CD4-positive, alpha-beta T cell (primary cell): ENCODE measurements at regions of chr12 and their contacts with region 1.

Region 1: DNA sequence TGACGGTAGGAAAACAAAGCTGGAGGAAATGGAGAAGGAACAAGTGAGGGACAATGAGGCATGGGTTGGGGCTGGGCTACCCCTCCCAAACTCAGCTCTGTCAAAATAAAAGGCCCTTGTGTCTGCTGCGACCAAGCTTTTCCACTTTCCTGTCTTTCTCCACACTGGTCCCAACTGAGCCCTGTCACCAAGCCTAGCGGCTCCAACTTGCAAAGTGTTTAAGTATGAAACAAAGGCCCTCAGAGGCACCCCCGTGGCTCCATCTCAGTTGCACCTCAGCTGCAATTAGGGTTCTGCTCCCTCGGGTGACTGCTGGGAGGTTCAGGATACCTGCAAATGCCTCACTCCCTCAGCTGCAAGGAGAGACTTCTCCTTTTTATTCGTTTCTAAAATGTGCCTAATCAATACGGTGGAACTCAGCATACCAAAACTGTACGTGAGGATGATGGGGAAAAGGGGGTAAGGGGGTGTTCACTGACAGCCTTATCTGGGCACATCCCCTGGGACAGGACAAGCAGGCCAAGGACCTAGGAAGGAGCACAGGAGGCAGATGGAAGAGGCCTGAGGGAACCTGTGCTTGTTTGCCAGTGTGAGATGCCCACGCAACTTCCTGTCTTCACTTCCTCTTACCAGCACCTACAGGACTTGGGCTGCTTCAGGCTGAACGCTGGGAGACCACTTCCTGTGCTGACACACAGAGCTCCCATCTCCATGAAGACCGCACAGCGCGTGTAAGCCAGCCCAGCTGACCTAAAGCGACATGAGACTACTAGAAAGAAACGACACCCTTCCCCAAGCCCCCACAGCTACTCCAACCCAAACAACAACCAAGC is 8.9 kb downstream of the VAMP1 start:
- DNase-seq: peak; percentile 59 to 96 (median 78)
- ATAC-seq: peak; percentile 82
- H3K4me3 ChIP-seq: peak overlapping the region; percentile 35
- H3K4me3 Mint-ChIP-seq: peak overlapping the region; percentile 79
- H3K27ac ChIP-seq: peak overlapping the region; percentile 94 to 97
- H3K27ac Mint-ChIP-seq: peak overlapping the region; percentile 92
- H3K4me1 ChIP-seq: peaks cover 91% of the 10 kb centered on the region
- H3K4me1 Mint-ChIP-seq: peaks cover 85% of the 10 kb centered on the region
- H3K27me3 ChIP-seq: no peaks in the 10 kb centered on the region
- H3K27me3 Mint-ChIP-seq: no peaks in the 10 kb centered on the region
- CTCF ChIP-seq: no peak

Region 2: GRCh38 chr12:6423267-6424007 is 38.2 kb before region 1 on chr12:
- CTCF ChIA-PET with region 1: interaction called, 61 read pairs
- POLR2A ChIA-PET with region 1: interaction called, 99 read pairs
- intact Hi-C with region 1: loop called (anchors 1 kb)
- DNase-seq: peak; percentile 58 to 94 (median 67)
- ATAC-seq: peak; percentile 73
- H3K4me3 ChIP-seq: no peak overlapping the region
- H3K4me3 Mint-ChIP-seq: peak overlapping the region; percentile 36
- H3K27ac ChIP-seq: peak overlapping the region in 1 of 2 donors; percentile 29
- H3K27ac Mint-ChIP-seq: peak overlapping the region; percentile 65
- H3K4me1 ChIP-seq: peaks cover 43% of the 10 kb centered on the region
- H3K4me1 Mint-ChIP-seq: peaks cover 32% of the 10 kb centered on the region
- H3K27me3 ChIP-seq: no peaks in the 10 kb centered on the region
- H3K27me3 Mint-ChIP-seq: no peaks in the 10 kb centered on the region
- CTCF ChIP-seq: peak; percentile 75

Region 3: GRCh38 chr12:6443361-6443983 is 18.1 kb before region 1 on chr12:
- CTCF ChIA-PET with region 1: interaction called, 27 read pairs
- POLR2A ChIA-PET with region 1: interaction called, 203 read pairs
- intact Hi-C with region 1: loop called in 1 of 2 experiments (anchors 2 kb)
- DNase-seq: peak in 3 of 14 experiments; percentile 32 to 47 (median 44)
- ATAC-seq: no peak
- H3K4me3 ChIP-seq: no peak overlapping the region
- H3K4me3 Mint-ChIP-seq: peak overlapping the region; percentile 98
- H3K27ac ChIP-seq: peak overlapping the region; percentile 64 to 65
- H3K27ac Mint-ChIP-seq: peak overlapping the region; percentile 97
- H3K4me1 ChIP-seq: peaks cover 56% of the 10 kb centered on the region
- H3K4me1 Mint-ChIP-seq: peaks cover 63% of the 10 kb centered on the region
- H3K27me3 ChIP-seq: no peaks in the 10 kb centered on the region
- H3K27me3 Mint-ChIP-seq: no peaks in the 10 kb centered on the region
- CTCF ChIP-seq: no peak

Region 4: GRCh38 chr12:6493497-6494257 is 32.1 kb after region 1 on chr12 and contains the start of gene NCAPD2:
- CTCF ChIA-PET with region 1: interaction called, 12 read pairs
- POLR2A ChIA-PET with region 1: interaction called, 29 read pairs
- intact Hi-C with region 1: loop called in 1 of 2 experiments (anchors 2 kb)
- DNase-seq: peak; percentile 87 to 98 (median 92)
- ATAC-seq: peak; percentile 84
- H3K4me3 ChIP-seq: peak within 1 kb of the TSS; percentile 96
- H3K4me3 Mint-ChIP-seq: peak within 1 kb of the TSS; percentile 93
- H3K27ac ChIP-seq: peak within 1 kb of the TSS; percentile 89 to 94
- H3K27ac Mint-ChIP-seq: peak within 1 kb of the TSS; percentile 91
- H3K4me1 ChIP-seq: peaks cover 34% of the 10 kb centered on the region
- H3K4me1 Mint-ChIP-seq: peaks cover 48% of the 10 kb centered on the region
- H3K27me3 ChIP-seq: no peaks in the 10 kb centered on the region
- H3K27me3 Mint-ChIP-seq: no peaks in the 10 kb centered on the region
- CTCF ChIP-seq: no peak
- total RNA-seq, gene NCAPD2: 13.7 to 14.9 TPM

Region 5: DNA sequence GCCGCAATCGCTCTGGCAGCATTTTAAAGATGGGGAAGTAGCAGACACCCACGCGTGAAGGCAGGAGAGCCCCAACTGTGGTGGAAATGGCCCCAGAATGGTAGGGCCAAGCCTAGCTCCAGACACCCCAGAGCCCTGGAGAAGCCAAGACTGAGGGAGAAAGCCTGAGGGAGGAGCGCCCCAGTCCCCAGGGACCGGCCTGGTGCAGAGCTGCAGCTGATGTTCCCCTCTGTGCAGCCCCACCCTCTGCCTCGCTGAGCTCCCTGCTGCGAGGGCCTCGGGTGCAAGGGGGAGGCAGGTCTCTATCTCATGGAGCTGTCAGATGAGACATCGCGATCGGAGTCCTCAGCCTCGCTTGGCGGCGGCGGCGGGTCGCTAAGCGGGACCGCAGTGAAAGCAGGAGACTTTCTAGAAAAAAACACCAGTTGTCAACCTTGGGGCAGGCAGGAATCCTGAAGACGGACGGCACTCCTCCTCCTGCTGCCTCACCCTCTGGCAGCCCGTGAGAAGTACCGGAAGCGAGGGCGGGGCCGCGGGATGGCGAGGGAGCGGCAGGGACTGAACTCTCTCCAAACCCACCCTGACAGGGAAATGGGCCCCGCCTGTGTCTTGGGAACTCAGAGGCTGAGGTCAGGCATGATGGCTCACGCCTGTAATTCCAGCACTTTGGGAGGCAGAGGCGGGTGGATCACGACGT is 78.7 kb after region 1 on chr12:
- CTCF ChIA-PET with region 1: interaction called, 31 read pairs
- POLR2A ChIA-PET with region 1: interaction called, 46 read pairs
- intact Hi-C with region 1: no loop called
- DNase-seq: peak in 10 of 14 experiments; percentile 33 to 67 (median 54)
- ATAC-seq: peak; percentile 37
- H3K4me3 ChIP-seq: peak overlapping the region; percentile 26
- H3K4me3 Mint-ChIP-seq: peak overlapping the region; percentile 84
- H3K27ac ChIP-seq: no peak overlapping the region
- H3K27ac Mint-ChIP-seq: peak overlapping the region; percentile 90
- H3K4me1 ChIP-seq: peaks cover 72% of the 10 kb centered on the region
- H3K4me1 Mint-ChIP-seq: peaks cover 59% of the 10 kb centered on the region
- H3K27me3 ChIP-seq: no peaks in the 10 kb centered on the region
- H3K27me3 Mint-ChIP-seq: no peaks in the 10 kb centered on the region
- CTCF ChIP-seq: no peak